RWPE1 (cell line): ENCODE measurements at regions of chr11 and their contacts with region 1.

Region 1: GRCh38 chr11:118640332-118641154 is 33.1 kb downstream of the PHLDB1 start:
- DNase-seq: no peak
- H3K27ac ChIP-seq: peak overlapping the region; percentile 71
- CTCF ChIP-seq: 0 out of 2 replicates have a peak, but pooled peaks have one; percentile 13

Region 2: DNA sequence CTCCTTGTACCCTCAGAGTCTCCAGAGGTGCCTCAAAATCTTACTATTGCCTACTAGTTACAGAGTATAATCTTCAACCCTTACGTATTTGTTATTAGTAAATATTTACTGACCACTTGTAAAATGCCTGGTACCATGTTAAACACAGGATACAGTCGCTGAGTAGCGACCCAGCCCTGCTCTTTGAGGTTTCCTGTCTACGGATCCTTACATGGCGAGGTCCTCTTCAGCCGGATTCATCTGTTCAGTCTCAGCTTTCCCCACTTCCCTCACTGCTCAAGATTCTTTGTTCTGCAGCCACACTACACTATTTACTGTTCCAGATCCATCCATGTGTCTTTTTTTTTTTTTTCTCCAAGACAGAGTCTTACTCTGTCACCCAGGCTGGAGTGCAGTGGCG is 126.4 kb before region 1 on chr11:
- CTCF ChIA-PET with region 1: no interaction called
- POLR2A ChIA-PET with region 1: no interaction called
- DNase-seq: no peak
- H3K27ac ChIP-seq: no peak overlapping the region
- CTCF ChIP-seq: no peak

Region 3: GRCh38 chr11:118607401-118608359 is 32.9 kb before region 1 on chr11 and contains the start of gene PHLDB1:
- CTCF ChIA-PET with region 1: interaction called, 25 read pairs
- POLR2A ChIA-PET with region 1: no interaction called
- DNase-seq: peak; percentile 71
- H3K27ac ChIP-seq: peak within 1 kb of the TSS; percentile 94
- CTCF ChIP-seq: peak; percentile 60

Region 4: GRCh38 chr11:118672846-118673245 is 32.3 kb after region 1 on chr11:
- CTCF ChIA-PET with region 1: no interaction called
- POLR2A ChIA-PET with region 1: no interaction called
- DNase-seq: no peak
- H3K27ac ChIP-seq: no peak overlapping the region
- CTCF ChIP-seq: no peak

Region 5: GRCh38 chr11:118838905-118839553 is 198.5 kb after region 1 on chr11:
- CTCF ChIA-PET with region 1: no interaction called
- POLR2A ChIA-PET with region 1: no interaction called
- DNase-seq: no peak
- H3K27ac ChIP-seq: no peak overlapping the region
- CTCF ChIP-seq: no peak

Region 6: DNA sequence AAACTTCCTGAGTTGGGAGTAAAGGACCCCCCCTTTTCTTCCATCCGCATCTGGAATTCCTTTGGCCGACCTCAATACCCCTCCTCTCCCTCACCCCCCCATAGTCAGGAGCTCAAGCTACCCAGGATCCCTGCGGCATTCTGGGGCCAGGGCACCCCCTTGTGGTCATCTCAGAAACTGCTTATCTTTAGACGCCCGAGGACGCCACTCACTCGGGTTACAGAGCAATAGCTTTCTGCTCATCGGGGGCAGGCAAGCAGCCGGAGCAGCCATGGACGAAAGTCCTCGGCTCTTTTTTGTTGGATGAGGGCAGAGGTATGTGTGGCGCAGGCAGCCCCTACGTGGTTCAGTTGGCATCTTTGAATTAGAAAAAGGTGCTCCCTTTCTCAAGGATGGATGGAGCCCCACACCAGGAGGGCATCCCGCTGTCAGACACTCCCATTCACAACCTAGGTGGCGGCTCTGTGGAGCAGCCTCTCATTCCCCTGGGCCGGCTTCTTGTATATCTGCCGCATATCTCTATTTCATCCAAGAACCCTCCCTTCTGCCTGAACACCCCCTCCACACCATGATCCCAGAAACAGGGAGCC is 697.9 kb after region 1 on chr11:
- CTCF ChIA-PET with region 1: no interaction called
- POLR2A ChIA-PET with region 1: no interaction called
- DNase-seq: peak; percentile 73
- H3K27ac ChIP-seq: peak overlapping the region; percentile 82
- CTCF ChIP-seq: peak; percentile 85